Keratinocyte (primary cell): ENCODE measurements at regions of chr4 and their contacts with region 1.

Region 1: DNA sequence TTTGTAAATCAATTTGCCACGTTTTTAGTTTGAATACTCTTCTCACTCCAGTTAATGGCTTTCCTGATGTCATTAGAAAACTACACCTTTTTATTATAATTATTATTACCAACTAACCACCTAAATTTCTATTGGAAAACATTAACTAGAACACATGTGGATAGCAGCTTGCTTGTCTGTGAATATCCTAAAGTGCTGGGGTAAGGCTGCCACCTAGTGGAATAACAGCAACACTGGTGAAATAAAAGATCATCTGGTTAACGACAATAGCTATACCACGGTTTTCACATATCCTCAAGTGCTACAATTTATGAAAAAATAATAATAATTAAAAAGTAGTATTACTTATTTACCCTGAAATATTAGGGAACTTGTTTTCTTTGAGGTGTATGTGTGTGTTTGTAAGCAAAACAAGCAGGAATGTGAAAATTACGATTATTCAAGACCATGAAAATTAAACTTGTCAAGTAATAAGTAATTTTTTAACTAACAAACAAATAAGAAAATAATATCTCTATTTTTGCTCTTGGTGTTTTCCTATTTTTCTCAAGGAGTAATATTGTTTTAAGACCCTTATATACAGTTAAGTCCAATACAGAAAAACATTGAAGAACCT is 130.1 kb upstream of the TECRL start:
- DNase-seq: peak; percentile 21
- H3K4me3 ChIP-seq: no peak overlapping the region
- H3K27ac ChIP-seq: no peak overlapping the region
- H3K4me1 ChIP-seq: no peaks in the 10 kb centered on the region
- H3K27me3 ChIP-seq: no peaks in the 10 kb centered on the region
- CTCF ChIP-seq: peak; percentile 49 to 62 (median 60)

Region 2: GRCh38 chr4:63296773-63297172 is 1242.6 kb before region 1 on chr4:
- dilution Hi-C with region 1: loop called (anchors 25 kb)
- DNase-seq: no peak
- H3K4me3 ChIP-seq: no peak overlapping the region
- H3K27ac ChIP-seq: no peak overlapping the region
- H3K4me1 ChIP-seq: no peaks in the 10 kb centered on the region
- H3K27me3 ChIP-seq: no peaks in the 10 kb centered on the region
- CTCF ChIP-seq: peak; percentile 24 to 36 (median 33)

Region 3: DNA sequence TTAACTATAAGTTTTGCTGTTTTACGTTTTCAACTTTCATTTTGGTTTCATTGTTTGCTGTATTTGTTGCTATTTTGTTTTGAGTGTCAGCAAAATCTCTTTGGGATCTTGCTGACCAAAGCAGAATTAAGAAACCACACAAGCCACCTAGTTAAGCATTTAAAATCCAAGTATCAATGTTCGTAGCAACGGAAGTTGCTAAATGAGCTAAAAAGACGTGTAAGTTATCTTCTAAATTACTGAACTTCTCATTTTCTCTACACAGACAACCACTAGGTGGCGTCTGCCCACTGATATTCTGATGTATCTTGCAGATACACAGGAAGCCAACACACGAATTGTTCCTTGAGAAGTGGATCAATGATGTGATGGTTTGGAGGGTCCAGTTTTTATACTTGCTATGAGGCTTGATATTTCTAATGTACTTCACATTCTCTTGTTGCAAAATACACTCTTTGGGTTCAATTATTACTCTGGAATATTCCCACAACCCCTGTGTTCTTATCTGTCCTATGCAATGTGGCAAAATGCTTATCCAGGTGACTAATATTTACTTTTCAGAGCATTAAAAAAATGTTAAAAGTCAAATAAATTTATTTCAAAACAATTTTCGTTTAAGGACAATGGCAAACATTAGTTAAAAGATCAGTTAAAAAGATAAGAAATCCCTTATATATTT is 380.6 kb before region 1 on chr4:
- dilution Hi-C with region 1: loop called (anchors 25 kb)
- DNase-seq: peak; percentile 33
- H3K4me3 ChIP-seq: peak overlapping the region in 2 of 3 experiments; percentile 48 to 54
- H3K27ac ChIP-seq: no peak overlapping the region
- H3K4me1 ChIP-seq: no peaks in the 10 kb centered on the region
- H3K27me3 ChIP-seq: no peaks in the 10 kb centered on the region
- CTCF ChIP-seq: peak; percentile 63 to 81 (median 69)

Region 4: DNA sequence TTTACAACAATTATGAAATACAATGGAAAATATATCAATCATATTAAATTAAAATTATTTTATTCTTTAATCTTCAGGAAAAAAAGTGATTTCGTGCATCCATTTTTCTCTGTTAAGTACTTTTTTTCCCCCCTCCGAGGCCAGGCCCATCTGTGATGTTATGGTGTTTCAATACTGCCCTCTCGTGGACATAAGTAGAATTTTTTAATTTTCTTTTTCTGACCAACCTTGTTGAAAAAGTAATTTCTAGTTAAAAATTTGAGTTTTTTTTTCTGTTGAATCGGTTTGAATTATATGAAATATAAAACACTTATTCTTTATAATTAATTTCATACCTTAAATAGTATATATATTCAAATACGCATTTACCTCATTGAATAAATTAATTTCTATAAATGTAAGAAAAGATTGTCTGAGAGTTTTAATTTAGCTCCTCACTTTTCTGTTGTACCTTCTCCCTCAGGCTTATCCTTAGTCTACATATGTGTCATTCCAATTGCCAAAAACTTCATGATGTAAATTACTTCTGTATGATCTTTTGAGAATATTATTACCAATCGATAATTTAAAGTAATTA is 45.7 kb after region 1 on chr4:
- dilution Hi-C with region 1: no loop called
- DNase-seq: peak; percentile 15
- H3K4me3 ChIP-seq: no peak overlapping the region
- H3K27ac ChIP-seq: no peak overlapping the region
- H3K4me1 ChIP-seq: peaks cover 2% of the 10 kb centered on the region
- H3K27me3 ChIP-seq: no peaks in the 10 kb centered on the region
- CTCF ChIP-seq: peak; percentile 26 to 36 (median 31)